ENCODE measurements at regions of chr14 and their contacts with region 1.

Region 1: DNA sequence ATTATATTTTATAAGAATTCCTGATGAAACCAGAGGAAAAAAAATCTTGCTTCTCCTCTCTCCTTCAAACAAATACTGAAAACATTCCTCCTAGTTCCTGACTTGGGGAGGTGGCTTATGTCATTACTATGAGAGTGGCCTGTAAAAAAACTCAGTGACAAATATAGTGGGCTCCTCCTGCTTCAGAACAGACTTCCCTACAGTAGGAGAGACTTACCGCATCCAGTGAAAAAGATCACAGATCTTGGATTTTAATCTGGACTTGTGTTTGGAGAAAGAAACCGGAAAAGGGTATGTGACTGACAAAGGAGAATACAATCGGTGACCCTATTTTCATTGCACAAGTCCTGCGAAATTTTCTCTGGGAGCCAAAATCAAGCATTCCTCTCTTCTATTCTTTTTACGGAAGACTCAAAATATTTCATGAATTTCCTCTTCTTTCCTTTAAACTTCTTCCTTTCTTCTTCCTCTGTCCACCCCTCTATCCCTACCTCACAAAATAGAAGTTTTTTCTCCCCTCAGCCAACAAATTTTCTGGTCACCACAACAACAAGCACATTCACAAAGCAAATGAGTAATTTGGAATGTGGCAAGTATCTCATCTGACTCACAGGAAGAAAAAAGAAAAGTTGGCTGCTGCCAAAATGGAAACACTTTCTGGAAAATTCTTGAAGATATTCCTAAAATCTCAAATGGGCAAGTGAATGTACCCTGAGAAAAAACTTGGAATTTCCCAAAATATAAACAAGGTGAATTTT is 185.1 kb upstream of the CDKN3 start:
- DNase-seq: no peak
- H3K4me3 Mint-ChIP-seq: no peak overlapping the region
- H3K27ac Mint-ChIP-seq: peak overlapping the region; percentile 36
- H3K4me1 Mint-ChIP-seq: peaks cover 10% of the 10 kb centered on the region
- H3K27me3 Mint-ChIP-seq: no peaks in the 10 kb centered on the region
- CTCF ChIP-seq: no peak

Region 2: DNA sequence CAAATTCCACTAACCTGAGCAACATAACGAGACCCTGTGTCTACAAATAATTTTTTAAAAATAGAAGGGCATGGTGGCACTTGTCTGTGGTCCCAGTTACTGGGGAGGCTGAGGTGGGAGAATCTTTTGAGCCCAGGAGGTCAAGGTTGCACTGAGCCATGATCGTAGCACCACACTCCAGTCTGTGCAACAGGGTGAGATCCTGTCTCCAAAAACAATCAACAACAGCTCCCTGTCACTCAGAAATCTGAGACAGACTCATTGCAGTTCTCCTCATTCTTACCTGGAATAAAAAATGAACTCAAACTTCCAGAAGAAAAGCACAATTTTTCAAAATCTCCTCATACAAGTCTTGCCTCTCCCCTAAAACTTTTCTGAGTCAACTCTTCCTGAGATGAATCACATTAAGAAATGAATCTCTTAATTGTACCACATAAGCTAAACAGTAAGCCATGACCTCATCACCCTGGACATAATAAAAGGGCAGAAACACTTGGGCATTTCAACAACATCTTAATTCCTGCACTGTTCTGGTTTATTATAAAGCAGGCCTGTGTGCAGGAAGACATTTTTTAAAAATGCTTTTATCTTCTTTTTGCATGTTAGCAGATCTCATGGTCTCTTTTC is 29.2 kb before region 1 on chr14:
- CTCF ChIA-PET with region 1: no interaction called
- intact Hi-C with region 1: loop called (anchors 1 kb)
- DNase-seq: peak; percentile 14
- H3K4me3 Mint-ChIP-seq: no peak overlapping the region
- H3K27ac Mint-ChIP-seq: peak overlapping the region; percentile 91
- H3K4me1 Mint-ChIP-seq: peaks cover 21% of the 10 kb centered on the region
- H3K27me3 Mint-ChIP-seq: no peaks in the 10 kb centered on the region
- CTCF ChIP-seq: no peak

Measured in Calu3 (cell line).